ENCODE measurements at regions of chr6 and their contacts with region 1.

Region 1: GRCh38 chr6:134182528-134182927 is 130.1 kb upstream of the SLC2A12 start:
- DNase-seq: no peak
- H3K4me3 ChIP-seq: no peak overlapping the region
- H3K27ac ChIP-seq: peak overlapping the region; percentile 39 to 77 (median 66)
- H3K4me1 ChIP-seq: peaks cover 18 to 41% of the 10 kb centered on the region in 2 donors
- H3K27me3 ChIP-seq: no peaks in the 10 kb centered on the region
- CTCF ChIP-seq: no peak
- POLR2A ChIP-seq: no peak

Region 2: DNA sequence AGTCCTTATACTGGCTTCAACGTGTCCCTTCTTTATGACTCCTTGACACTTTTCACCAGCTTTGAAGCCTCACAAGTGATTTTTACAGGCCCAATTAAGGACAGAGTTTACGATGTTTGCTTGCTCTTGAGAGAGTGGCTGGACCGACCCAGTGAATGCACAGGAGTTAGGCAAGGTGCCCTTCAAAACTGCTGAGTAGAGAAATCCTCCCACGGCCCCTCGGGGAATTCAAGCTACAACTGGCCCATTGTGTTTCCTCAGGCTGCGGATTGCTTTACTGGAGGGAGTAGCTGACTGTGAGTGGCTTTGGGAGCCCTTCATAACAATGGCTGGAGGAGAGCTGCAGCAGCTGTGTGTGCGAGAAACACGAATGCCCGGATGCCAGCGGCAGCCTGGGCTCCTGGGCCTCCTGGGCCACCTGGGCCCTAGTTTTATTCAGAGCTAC is 85.4 kb after region 1 on chr6:
- intact Hi-C with region 1: loop called (anchors 10 kb)
- DNase-seq: peak; percentile 70 to 78
- H3K4me3 ChIP-seq: no peak overlapping the region
- H3K27ac ChIP-seq: peak overlapping the region; percentile 72 to 90 (median 74)
- H3K4me1 ChIP-seq: peaks cover 12 to 23% of the 10 kb centered on the region in 2 donors
- H3K27me3 ChIP-seq: no peaks in the 10 kb centered on the region
- CTCF ChIP-seq: no peak
- POLR2A ChIP-seq: peak in 1 of 2 donors; percentile 26

Region 3: GRCh38 chr6:134517145-134517658 is 334.7 kb after region 1 on chr6:
- intact Hi-C with region 1: loop called (anchors 5 kb)
- DNase-seq: peak; percentile 99
- H3K4me3 ChIP-seq: no peak overlapping the region
- H3K27ac ChIP-seq: peak overlapping the region; percentile 81 to 91 (median 90)
- H3K4me1 ChIP-seq: peaks cover 57 to 58% of the 10 kb centered on the region in 2 donors
- H3K27me3 ChIP-seq: no peaks in the 10 kb centered on the region
- CTCF ChIP-seq: no peak
- POLR2A ChIP-seq: no peak